Left ventricle myocardium inferior (tissue), 1 donor: ENCODE measurements at regions of chr1 and their contacts with region 1.

Region 1: DNA sequence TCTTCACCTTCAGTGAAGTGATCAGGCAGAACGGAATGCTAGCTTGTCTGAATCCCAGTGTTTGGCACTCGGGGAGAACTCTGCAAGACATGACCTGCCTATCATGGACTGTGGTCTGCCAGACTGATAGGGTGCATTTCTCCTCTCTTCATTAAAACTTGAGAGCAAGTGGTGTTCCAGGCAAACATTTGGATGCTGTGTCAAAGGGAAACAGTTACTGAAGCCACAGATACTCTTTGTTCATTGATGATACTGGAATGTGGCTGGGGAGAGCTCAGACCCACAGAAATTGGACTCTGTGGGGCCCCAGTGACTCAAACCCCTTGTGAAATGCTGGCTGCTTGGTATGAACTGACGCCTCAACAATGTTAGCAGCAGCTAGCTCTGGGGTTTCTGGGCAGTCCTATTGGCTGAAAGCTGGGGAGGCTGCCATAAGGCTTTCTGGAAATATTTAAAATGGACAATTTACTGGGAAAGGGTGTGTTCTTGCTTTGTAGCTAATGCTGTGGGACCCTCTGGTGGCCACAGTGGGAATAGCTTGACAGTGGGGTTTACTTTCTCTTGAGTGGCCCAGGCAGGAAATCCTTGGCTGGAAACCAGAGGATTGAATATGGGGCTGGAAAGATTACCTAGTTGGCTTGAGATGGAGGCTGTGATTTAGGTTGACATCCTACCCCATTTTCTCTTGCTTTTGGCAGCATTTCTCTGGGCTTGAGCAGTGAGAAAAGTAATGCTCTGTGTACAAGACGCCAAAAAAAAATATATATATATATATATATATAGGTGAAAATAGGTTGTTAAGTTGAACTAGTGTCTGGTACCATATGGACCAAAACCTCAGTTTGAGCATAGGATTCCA is 8.0 kb upstream of the S100A10 start:
- DNase-seq: peak; percentile 87
- H3K4me3 ChIP-seq: no peak overlapping the region
- H3K27ac ChIP-seq: peak overlapping the region; percentile 49
- H3K4me1 ChIP-seq: peaks cover 42% of the 10 kb centered on the region
- H3K27me3 ChIP-seq: no peaks in the 10 kb centered on the region
- CTCF ChIP-seq: peak; percentile 97

Region 2: GRCh38 chr1:151968058-151968457 is 33.6 kb before region 1 on chr1:
- intact Hi-C with region 1: loop called (anchors 5 kb)
- DNase-seq: no peak
- H3K4me3 ChIP-seq: no peak overlapping the region
- H3K27ac ChIP-seq: no peak overlapping the region
- H3K4me1 ChIP-seq: peaks cover 21% of the 10 kb centered on the region
- H3K27me3 ChIP-seq: no peaks in the 10 kb centered on the region
- CTCF ChIP-seq: peak; percentile 87